A549 (cell line): ENCODE measurements at regions of chr17 and their contacts with region 1.

Region 1: GRCh38 chr17:76091526-76092285 is 11.9 kb downstream of the EXOC7 start:
- DNase-seq: no peak
- ATAC-seq: no peak
- H3K4me3 ChIP-seq: no peak overlapping the region
- H3K27ac ChIP-seq: no peak overlapping the region
- H3K4me1 ChIP-seq: no peaks in the 10 kb centered on the region
- CTCF ChIP-seq: no peak
- EP300 ChIP-seq: no peak
- POLR2A ChIP-seq: no peak
- RAD21 ChIP-seq: no peak

Region 2: GRCh38 chr17:76103274-76104139 is 11.8 kb after region 1 on chr17 and contains the start of gene EXOC7:
- CTCF ChIA-PET with region 1: interaction called, 10 read pairs
- POLR2A ChIA-PET with region 1: no interaction called
- DNase-seq: peak; percentile 95
- ATAC-seq: peak; percentile 93 to 96
- H3K4me3 ChIP-seq: peak within 1 kb of the TSS; percentile 69
- H3K27ac ChIP-seq: peak within 1 kb of the TSS; percentile 84 to 87
- H3K4me1 ChIP-seq: peaks cover 11% of the 10 kb centered on the region
- CTCF ChIP-seq: no peak
- EP300 ChIP-seq: no peak
- POLR2A ChIP-seq: peak; percentile 85
- RAD21 ChIP-seq: no peak
- polyA plus RNA-seq, gene EXOC7: 64.5 and 76.4 TPM in 2 replicates